ENCODE measurements at regions of chr12 and their contacts with region 1.

Region 1: GRCh38 chr12:49060237-49061156 is at the start of gene KMT2D:
- DNase-seq: peak; percentile 94 to 96 (median 95)
- ATAC-seq: peak; percentile 76 to 85 (median 84)
- H3K4me3 ChIP-seq: peak within 1 kb of the TSS; percentile 79 to 100 (median 93)
- H3K27ac ChIP-seq: peak within 1 kb of the TSS; percentile 94 to 99 (median 98)
- H3K4me1 ChIP-seq: peaks cover 18 to 53% (median 39%) of the 10 kb centered on the region in 12 donors
- H3K27me3 ChIP-seq: no peaks in the 10 kb centered on the region
- CTCF ChIP-seq: peak in 8 of 12 donors; percentile 8 to 44 (median 32)
- POLR2A ChIP-seq: peak in 1 of 2 donors; percentile 50
- total RNA-seq, gene KMT2D: 32.5 to 82.7 (median 55.6) TPM

Region 2: DNA sequence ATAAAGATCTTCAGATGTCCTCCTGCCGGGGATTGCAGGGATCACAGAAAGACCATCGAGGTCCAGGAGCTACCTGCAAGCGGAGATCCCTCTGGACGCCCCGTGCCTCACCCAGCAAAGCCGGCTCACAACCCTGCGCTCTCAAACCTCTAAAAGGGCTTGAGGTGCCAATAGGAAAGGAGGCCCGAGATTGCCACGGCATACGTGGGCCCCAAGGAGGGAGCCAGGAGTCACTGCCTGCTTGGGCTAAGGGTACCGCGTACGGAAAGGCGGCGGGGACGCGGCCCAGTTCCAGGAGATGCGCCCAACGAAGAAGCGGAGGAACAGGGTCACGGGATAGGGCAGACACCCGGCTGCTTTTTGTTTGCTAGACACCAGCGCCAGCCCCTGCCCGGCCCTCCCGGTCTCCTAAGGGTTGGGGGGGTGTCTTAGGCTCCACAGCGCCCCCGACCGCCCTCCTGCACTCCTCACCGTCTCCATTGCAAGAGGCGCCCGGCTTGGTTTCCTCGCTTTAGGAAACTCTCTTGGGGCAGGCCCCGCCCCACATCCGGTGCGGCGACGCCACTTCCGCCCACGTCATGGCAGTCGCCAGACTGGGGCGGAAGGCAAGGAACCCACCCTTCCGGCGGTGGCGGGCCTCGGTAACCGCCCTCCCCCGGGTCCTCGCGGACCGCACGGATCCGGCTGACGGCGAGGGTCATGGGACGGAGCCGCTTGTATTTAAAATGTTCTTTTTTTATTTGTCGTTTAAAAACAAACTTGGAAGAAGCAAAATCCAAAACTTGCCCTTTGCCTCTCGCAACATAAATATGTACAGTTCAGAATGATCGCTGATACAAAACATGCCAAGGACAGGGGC is 42.0 kb before region 1 on chr12 and contains the start of gene PRKAG1:
- intact Hi-C with region 1: loop called in 4 of 10 experiments (anchors 2 to 5 kb)
- DNase-seq: peak; percentile 96 to 99 (median 97)
- ATAC-seq: peak; percentile 93 to 97 (median 96)
- H3K4me3 ChIP-seq: peak within 1 kb of the TSS; percentile 63 to 98 (median 82)
- H3K27ac ChIP-seq: peak within 1 kb of the TSS; percentile 78 to 99 (median 95)
- H3K4me1 ChIP-seq: peaks cover 0 to 46% (median 28%) of the 10 kb centered on the region in 12 donors
- H3K27me3 ChIP-seq: no peaks in the 10 kb centered on the region
- CTCF ChIP-seq: peak in 11 of 12 donors; percentile 9 to 73 (median 55)
- POLR2A ChIP-seq: peak; percentile 24 to 92
- total RNA-seq, gene PRKAG1: 72.0 to 107 (median 98.6) TPM

Region 3: DNA sequence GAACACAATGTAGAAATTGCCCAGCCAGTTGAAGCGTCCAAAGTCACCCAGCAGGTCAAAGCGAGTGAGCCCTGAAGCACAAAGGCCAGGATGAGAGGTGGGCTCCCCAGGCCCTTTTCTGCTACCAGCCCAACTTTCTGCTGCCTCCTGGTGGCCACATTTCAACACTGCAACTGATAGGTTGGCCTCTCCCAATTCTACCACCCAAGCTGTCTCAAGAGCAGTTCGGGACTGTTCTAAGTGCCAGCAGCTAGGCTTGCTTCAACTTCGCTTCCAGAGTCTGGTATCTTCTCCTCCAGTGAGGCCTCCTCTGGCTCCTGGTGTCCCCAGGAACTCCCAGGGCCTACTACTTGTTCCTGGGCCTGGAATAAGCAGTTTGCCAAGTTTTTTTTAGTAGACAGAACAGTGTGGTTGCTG is 37.5 kb after region 1 on chr12:
- intact Hi-C with region 1: loop called in 3 of 10 experiments (anchors 5 kb)
- DNase-seq: peak; percentile 27 to 60 (median 47)
- ATAC-seq: peak; percentile 13 to 35 (median 26)
- H3K4me3 ChIP-seq: no peak overlapping the region
- H3K27ac ChIP-seq: no peak overlapping the region
- H3K4me1 ChIP-seq: peaks cover 0 to 23% (median 19%) of the 10 kb centered on the region in 12 donors
- H3K27me3 ChIP-seq: peaks cover 0 to 19% (median 12%) of the 10 kb centered on the region in 9 donors
- CTCF ChIP-seq: peak; percentile 68 to 85 (median 76)
- POLR2A ChIP-seq: no peak

Region 4: GRCh38 chr12:49121047-49121696 is 60.7 kb after region 1 on chr12:
- intact Hi-C with region 1: loop called in 8 of 10 experiments (anchors 1 to 10 kb)
- DNase-seq: peak in 4 of 5 donors; percentile 27 to 54 (median 42)
- ATAC-seq: peak in 3 of 4 donors; percentile 77 to 83 (median 78)
- H3K4me3 ChIP-seq: no peak overlapping the region
- H3K27ac ChIP-seq: no peak overlapping the region
- H3K4me1 ChIP-seq: no peaks in the 10 kb centered on the region
- H3K27me3 ChIP-seq: no peaks in the 10 kb centered on the region
- CTCF ChIP-seq: peak; percentile 46 to 70 (median 63)
- POLR2A ChIP-seq: no peak

Region 5: GRCh38 chr12:49188914-49189367 is 128.4 kb after region 1 on chr12 and contains the start of gene TUBA1A:
- intact Hi-C with region 1: loop called in 1 of 10 experiments (anchors 5 kb)
- DNase-seq: peak; percentile 93 to 96 (median 95)
- ATAC-seq: peak; percentile 91 to 95 (median 93)
- H3K4me3 ChIP-seq: peak within 1 kb of the TSS; percentile 43 to 98 (median 88)
- H3K27ac ChIP-seq: peak within 1 kb of the TSS; percentile 90 to 100 (median 98)
- H3K4me1 ChIP-seq: peaks cover 0 to 32% (median 17%) of the 10 kb centered on the region in 12 donors
- H3K27me3 ChIP-seq: no peaks in the 10 kb centered on the region
- CTCF ChIP-seq: no peak
- POLR2A ChIP-seq: peak; percentile 27 to 93
- total RNA-seq, gene TUBA1A: 122 to 280 (median 184) TPM

Region 6: DNA sequence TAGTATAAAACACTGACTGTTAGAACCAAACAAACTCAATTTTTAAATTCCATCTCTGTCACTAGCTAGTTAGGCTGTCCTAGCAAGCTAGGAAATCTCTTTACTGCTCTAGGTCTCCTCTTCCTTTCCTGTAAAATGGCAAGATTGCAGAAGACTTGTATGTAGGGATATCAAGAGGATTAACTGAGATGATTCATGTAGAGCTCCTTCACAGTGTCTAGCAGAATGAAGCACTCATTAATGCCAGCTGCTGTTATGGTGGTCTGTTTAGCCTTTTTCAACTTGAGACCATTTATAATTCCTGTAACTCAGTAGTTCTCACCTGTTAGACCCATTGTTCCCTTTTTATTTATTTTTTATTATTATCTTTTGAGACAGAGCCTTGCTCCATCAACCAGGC is 410.5 kb after region 1 on chr12:
- intact Hi-C with region 1: no loop called
- DNase-seq: no peak
- ATAC-seq: no peak
- H3K4me3 ChIP-seq: no peak overlapping the region
- H3K27ac ChIP-seq: no peak overlapping the region
- H3K4me1 ChIP-seq: peaks cover 0 to 3% (median 0%) of the 10 kb centered on the region in 12 donors
- H3K27me3 ChIP-seq: no peaks in the 10 kb centered on the region
- CTCF ChIP-seq: no peak
- POLR2A ChIP-seq: no peak